GM12878 (cell line): ENCODE measurements at regions of chr19 and their contacts with region 1.

Region 1: DNA sequence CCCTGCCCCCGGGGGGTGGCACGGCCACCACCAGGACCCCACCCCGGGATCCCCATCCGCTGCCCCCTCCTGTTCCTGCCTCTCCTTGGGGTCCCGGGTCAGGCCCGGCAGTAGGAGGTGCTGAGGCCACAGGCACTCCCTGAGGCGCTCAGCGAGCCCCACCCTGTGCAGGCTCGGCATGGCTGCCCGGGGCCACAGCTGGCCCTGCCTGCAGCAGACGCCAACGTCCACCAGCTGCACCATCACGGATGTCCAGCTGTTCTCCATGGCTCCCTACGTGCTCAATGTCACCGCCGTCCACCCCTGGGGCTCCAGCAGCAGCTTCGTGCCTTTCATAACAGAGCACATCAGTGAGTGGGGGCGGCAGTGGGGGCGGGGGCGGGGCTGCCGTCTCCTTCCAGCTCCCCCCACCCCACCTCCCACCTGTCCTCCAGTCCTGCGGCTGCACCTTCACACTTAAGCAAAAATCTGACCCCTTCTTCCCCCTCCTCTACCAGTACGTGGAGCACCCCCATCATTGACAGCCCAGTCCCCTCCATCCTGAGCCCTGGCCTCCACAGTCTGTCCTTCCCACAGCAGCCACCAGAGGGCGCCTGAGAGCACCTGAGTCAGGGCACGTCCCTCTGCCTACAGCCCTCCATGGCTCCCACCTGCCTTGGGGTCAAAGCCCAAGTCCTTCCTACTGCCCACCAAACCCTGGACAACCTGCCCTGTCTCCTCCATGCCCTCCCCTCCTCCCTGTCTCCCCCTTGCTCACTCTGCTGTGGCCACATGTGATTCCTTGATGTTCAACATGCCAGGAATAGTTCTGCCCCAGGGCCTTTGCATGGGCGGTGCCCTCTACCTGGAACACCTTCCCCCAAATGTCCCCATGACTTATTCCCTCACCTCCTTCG is 3.9 kb downstream of the EBI3 start:
- DNase-seq: no peak
- ATAC-seq: peak; percentile 50
- H3K4me3 ChIP-seq: peak overlapping the region; percentile 48; the same call in 1 of the 2 replicates
- H3K27ac ChIP-seq: no peak overlapping the region
- H3K4me1 ChIP-seq: peaks cover 3% of the 10 kb centered on the region
- H3K27me3 ChIP-seq: no peaks in the 10 kb centered on the region
- CTCF ChIP-seq: peak; percentile 77 to 98 (median 92)
- EP300 ChIP-seq: no peak
- POLR2A ChIP-seq: no peak
- RAD21 ChIP-seq: peak; percentile 41

Region 2: GRCh38 chr19:4215807-4216370 is 17.3 kb before region 1 on chr19:
- CTCF ChIA-PET with region 1: interaction called, 6 read pairs
- POLR2A ChIA-PET with region 1: interaction called, 7 read pairs
- RAD21 ChIA-PET with region 1: interaction called, 3 read pairs
- SMC1A ChIA-PET with region 1: interaction called, 4 read pairs
- in situ Hi-C with region 1: no loop called
- intact Hi-C with region 1: loop called (anchors 2 kb)
- DNase-seq: no peak
- ATAC-seq: no peak
- H3K4me3 ChIP-seq: no peak overlapping the region
- H3K27ac ChIP-seq: no peak overlapping the region
- H3K4me1 ChIP-seq: peaks cover 13% of the 10 kb centered on the region
- H3K27me3 ChIP-seq: no peaks in the 10 kb centered on the region
- CTCF ChIP-seq: no peak
- EP300 ChIP-seq: no peak
- POLR2A ChIP-seq: no peak
- RAD21 ChIP-seq: no peak

Region 3: DNA sequence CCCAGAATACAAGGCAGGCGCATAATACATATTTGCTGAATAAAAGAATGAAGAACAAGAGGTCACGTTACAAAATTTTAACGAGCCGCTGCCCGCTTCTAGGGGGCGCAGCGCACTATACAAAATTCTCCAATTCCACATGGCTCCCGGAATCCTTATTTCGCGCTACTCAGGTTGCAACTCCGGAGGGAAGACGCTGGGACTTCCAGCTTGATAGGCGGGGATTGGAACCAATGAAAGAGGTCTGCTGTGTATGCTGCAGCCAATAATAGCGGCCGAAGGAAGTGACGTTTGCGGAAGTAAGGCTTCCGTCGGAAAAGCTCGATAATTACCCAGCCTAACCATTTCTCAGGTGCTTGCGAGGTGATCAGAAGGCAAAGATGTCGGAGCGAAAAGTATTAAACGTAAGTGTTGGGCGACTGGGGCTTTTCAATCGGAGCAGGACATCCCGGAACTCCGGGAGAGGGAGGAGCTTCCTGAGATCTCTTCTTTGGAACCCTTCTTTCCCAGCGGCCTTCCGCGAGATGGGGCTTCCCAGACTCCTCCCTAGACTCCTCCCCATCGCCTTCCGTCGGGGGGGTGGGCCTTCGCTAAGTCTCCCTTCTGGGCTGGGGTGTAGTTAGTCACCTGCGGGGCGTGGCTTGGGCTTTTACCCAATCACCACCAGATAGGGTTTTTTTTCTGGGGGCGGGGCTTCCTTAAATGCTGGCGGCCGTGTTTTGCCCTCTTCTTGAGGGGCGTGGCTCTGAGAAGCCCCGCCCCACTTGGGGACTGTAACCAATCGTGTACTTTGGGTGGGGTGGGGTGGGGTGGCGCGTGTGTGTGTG is 13.8 kb after region 1 on chr19 and contains the start of gene YJU2:
- CTCF ChIA-PET with region 1: interaction called, 42 read pairs
- POLR2A ChIA-PET with region 1: interaction called, 45 read pairs
- RAD21 ChIA-PET with region 1: interaction called, 5 read pairs
- SMC1A ChIA-PET with region 1: interaction called, 10 read pairs
- in situ Hi-C with region 1: no loop called
- intact Hi-C with region 1: loop called (anchors 2 kb)
- DNase-seq: peak; percentile 94
- ATAC-seq: peak; percentile 98
- H3K4me3 ChIP-seq: peak within 1 kb of the TSS; percentile 74
- H3K27ac ChIP-seq: peak within 1 kb of the TSS; percentile 100
- H3K4me1 ChIP-seq: peaks cover 11% of the 10 kb centered on the region
- H3K27me3 ChIP-seq: no peaks in the 10 kb centered on the region
- CTCF ChIP-seq: peak; percentile 44 to 54 (median 44)
- EP300 ChIP-seq: no peak; a peak in 1 of 4 replicates
- POLR2A ChIP-seq: peak; percentile 77
- RAD21 ChIP-seq: peak; percentile 47
- polyA plus RNA-seq, gene YJU2: 0.26 to 1.9 TPM